IMR-90 (cell line): ENCODE measurements at regions of chr1 and their contacts with region 1.

Region 1: DNA sequence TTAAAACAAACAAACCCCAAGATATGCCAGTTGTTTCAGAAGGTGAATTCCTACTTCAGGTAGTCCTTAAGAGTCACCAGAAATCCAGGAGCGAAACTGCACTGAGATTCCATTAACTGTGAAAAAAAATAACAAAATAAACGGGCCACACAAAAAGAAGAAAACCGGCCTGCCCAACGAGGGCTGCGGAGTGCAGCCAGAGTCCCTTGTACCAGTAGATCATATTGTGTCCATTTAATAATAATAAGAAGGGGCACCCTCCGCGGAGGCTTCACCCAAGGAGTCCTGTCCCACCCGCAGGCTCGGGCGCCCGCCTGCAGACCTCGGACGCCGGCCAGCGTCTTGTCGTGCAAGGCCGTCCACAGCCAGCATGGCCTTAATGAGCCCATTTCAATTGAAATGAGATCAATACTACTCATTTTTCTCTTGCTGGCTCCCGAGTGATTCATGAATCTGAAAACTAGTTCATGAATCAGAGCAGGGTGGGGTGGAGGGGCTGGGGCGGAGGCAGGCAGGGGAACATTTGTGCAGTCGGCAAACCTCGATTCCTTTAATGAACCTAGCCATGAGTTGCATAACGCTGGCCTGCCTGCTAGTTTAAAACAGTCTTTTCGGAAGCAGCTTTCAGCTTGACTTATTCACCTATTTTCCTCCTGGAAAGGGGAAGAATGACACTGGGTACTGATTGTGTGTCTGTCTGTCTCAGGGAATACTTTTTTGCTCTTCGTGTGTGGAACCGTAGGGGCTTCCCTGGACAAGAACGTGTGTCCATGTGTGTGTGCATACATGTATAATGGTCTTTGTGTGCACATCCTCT is 113.1 kb upstream of the IRF2BP2 start:
- DNase-seq: peak; percentile 87
- ATAC-seq: peak; percentile 13
- H3K4me3 ChIP-seq: peak overlapping the region; percentile 13; the same call in 1 of the 2 replicates
- H3K27ac ChIP-seq: peak overlapping the region; percentile 92
- H3K4me1 ChIP-seq: peaks cover 55% of the 10 kb centered on the region
- H3K27me3 ChIP-seq: no peaks in the 10 kb centered on the region
- CTCF ChIP-seq: no peak
- POLR2A ChIP-seq: peak; percentile 35; the same call in 1 of the 2 replicates
- RAD21 ChIP-seq: no peak; the same call in 1 of the 2 replicates

Region 2: DNA sequence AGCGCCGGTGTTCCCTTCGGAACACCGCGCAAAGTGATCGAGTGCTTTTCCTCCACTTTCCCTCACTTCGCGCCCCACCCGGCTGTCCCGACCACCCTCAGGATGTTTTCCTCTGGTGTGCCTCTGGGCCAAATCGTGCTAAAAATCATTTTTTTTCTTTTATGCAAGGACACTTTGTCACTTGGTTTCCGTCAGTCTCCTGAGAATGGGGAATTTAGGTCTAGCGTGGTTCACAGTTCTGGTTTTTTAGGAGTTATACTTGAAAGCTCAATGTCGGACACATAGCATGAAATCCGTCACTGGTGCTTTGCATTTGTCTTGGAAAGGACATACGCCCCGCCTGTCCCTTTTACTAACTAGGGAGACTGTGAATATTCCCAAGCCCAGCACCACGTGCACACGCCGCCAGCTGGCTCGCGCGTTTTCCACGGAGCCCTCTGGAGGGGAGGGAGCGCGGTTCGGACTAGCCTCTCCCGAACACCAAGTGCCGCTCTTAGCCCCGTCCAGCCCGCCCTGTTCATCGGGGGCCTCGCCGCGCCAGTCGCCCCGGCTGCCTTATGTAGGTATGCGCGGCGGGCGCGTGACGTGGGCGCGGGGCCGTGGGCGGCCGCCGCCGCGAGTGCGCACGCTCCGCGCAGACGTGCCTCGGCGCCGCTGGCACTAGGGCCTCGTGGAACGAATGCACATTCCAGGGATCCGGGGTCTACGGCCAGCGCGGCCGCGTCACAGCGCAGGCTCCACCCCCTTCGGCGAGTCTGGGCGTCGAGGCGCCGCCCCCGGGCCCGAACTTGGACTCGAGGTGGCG is 112.6 kb before region 1 on chr1:
- CTCF ChIA-PET with region 1: interaction called, 7 read pairs
- POLR2A ChIA-PET with region 1: interaction called, 18 read pairs
- dilution Hi-C with region 1: no loop called
- in situ Hi-C with region 1: loop called (anchors 5 kb)
- intact Hi-C with region 1: loop called (anchors 1 kb)
- DNase-seq: peak; percentile 95
- ATAC-seq: peak; percentile 74
- H3K4me3 ChIP-seq: peak overlapping the region; percentile 76
- H3K27ac ChIP-seq: peak overlapping the region; percentile 98
- H3K4me1 ChIP-seq: peaks cover 14% of the 10 kb centered on the region
- H3K27me3 ChIP-seq: no peaks in the 10 kb centered on the region
- CTCF ChIP-seq: peak; percentile 7; the same call in 1 of the 2 replicates
- POLR2A ChIP-seq: peak; percentile 98
- RAD21 ChIP-seq: peak; percentile 20

Region 3: DNA sequence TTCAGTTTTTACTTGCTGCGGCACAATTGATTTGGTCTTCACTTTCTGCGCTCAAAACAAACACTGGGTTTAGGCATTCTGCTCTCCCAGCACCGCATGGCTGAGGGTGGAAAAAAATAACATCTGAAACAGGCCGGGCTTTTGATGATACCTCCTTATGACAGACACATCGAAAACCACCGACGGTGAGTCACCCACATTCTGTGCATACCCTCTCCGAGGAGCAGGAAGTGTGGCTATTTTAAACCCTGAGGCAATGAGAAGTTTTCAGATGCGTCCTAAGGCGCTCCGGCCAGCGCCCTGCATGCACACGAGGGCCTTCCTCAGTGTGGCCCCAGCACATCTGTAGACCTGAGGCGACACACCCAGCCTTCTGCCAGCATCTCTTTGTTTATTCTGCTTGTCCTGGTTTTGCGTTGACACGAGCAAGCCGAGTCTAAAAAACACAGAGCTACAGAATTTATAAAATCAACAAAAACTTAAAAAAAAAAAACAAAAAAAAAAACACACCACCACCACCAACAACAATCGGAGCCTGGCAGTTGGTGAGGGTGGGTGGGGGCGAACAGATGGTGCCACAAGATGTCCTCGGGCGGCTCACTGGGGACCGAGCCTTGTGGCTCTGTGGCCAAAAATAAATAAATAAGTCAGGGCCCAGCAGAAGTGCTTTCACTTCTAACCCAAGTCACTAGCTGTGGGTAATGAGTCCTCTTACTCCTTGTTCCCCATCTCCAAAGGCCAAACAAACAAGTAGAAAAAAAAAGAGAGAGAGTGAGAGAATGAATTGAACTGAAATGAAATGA is 49.4 kb after region 1 on chr1:
- CTCF ChIA-PET with region 1: no interaction called
- POLR2A ChIA-PET with region 1: interaction called, 4 read pairs
- dilution Hi-C with region 1: no loop called
- in situ Hi-C with region 1: loop called (anchors 5 kb)
- intact Hi-C with region 1: loop called (anchors 1 kb)
- DNase-seq: peak; percentile 99
- ATAC-seq: peak; percentile 98
- H3K4me3 ChIP-seq: no peak overlapping the region
- H3K27ac ChIP-seq: peak overlapping the region; percentile 80
- H3K4me1 ChIP-seq: peaks cover 7% of the 10 kb centered on the region
- H3K27me3 ChIP-seq: peaks cover 9% of the 10 kb centered on the region
- CTCF ChIP-seq: no peak
- POLR2A ChIP-seq: peak; percentile 71
- RAD21 ChIP-seq: 0 out of 2 replicates have a peak, but pooled peaks have one; percentile 40

Region 4: DNA sequence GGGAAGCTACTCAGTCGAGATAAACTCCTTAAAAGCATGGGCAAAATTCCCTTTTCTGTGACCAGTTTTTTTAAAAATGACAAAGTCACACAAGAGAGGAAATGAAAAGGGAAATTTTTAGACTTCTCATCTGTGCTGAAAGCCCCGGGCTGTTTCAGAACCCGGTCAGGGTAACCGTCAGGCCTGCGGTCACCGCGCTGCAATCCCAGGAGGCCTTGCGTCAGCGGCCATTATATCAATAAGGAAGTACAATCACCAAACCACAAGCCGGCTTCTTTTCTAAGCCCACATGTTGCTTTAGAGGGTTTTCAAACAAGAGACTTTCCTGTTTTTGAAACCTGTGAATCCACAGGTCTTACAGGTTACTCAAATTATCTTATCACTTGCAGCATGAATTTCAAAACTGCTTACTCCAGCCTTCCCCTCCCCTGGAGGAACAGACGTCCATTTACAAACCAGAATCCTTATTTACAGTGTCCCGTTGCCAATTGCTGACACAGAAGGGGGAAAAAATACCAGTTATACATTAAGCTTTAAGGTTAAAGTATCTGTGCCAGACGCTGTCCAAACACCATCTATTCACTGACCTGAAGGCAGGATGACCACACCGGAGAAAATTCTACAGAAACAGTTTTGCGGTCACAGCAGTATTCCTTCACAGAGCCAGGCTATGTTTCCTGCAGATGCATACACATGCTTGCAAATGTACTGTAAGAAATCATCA is 240.2 kb after region 1 on chr1:
- CTCF ChIA-PET with region 1: no interaction called
- POLR2A ChIA-PET with region 1: no interaction called
- dilution Hi-C with region 1: no loop called
- in situ Hi-C with region 1: no loop called
- intact Hi-C with region 1: loop called (anchors 2 kb)
- DNase-seq: peak; percentile 95
- ATAC-seq: peak; percentile 33
- H3K4me3 ChIP-seq: no peak overlapping the region
- H3K27ac ChIP-seq: peak overlapping the region; percentile 90
- H3K4me1 ChIP-seq: peaks cover 21% of the 10 kb centered on the region
- H3K27me3 ChIP-seq: no peaks in the 10 kb centered on the region
- CTCF ChIP-seq: no peak
- POLR2A ChIP-seq: no peak
- RAD21 ChIP-seq: no peak; the same call in 1 of the 2 replicates

Region 5: DNA sequence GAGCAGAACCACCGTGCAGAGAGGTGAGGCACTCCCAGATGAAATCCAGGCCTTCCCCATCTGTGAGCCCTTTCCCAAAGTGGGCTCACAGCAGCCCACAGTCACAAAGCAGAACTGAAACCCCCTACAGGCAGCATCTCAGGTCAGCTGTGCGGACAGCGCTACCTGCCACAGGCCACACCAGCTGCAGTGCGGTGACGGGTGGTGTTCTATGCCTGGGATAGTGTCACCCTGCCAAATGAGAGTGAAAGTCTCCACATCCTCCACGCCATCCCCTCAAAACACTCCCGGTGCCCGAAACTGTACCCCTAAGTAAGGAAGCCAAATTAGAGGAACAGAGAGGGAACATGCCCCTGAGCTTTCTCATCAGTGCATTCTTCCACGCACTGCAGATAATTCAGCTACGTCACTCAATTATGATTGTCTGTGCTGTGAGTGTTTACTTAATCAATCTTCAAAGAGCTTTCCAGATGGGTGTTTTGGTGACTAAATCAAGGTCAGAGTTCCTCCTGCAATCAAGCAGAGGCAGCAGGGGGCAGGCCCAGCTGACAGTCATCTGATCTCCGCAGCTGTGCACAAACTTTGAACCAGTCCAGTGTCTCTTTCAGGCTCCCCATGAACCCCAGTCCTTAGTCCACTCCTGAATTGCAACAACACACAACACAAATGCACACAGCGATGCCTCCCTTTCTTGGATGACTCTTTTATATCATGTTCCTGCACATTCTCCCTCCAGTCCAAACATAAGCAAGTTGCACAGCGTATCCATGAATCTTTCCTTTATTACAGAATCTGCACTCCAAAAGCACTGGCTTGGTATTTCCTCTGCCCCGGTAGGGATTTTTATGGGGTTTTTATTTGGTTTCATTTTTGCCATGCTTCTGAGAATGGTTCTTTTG is 255.5 kb after region 1 on chr1:
- CTCF ChIA-PET with region 1: no interaction called
- POLR2A ChIA-PET with region 1: interaction called, 3 read pairs
- dilution Hi-C with region 1: no loop called
- in situ Hi-C with region 1: loop called (anchors 10 kb)
- intact Hi-C with region 1: no loop called
- DNase-seq: peak; percentile 93
- ATAC-seq: peak; percentile 24
- H3K4me3 ChIP-seq: no peak overlapping the region
- H3K27ac ChIP-seq: peak overlapping the region; percentile 96
- H3K4me1 ChIP-seq: peaks cover 53% of the 10 kb centered on the region
- H3K27me3 ChIP-seq: no peaks in the 10 kb centered on the region
- CTCF ChIP-seq: peak; percentile 19; the same call in 1 of the 2 replicates
- POLR2A ChIP-seq: peak; percentile 54
- RAD21 ChIP-seq: peak; percentile 40